GM12878 (cell line): ENCODE measurements at regions of chr11 and their contacts with region 1.

Region 1: DNA sequence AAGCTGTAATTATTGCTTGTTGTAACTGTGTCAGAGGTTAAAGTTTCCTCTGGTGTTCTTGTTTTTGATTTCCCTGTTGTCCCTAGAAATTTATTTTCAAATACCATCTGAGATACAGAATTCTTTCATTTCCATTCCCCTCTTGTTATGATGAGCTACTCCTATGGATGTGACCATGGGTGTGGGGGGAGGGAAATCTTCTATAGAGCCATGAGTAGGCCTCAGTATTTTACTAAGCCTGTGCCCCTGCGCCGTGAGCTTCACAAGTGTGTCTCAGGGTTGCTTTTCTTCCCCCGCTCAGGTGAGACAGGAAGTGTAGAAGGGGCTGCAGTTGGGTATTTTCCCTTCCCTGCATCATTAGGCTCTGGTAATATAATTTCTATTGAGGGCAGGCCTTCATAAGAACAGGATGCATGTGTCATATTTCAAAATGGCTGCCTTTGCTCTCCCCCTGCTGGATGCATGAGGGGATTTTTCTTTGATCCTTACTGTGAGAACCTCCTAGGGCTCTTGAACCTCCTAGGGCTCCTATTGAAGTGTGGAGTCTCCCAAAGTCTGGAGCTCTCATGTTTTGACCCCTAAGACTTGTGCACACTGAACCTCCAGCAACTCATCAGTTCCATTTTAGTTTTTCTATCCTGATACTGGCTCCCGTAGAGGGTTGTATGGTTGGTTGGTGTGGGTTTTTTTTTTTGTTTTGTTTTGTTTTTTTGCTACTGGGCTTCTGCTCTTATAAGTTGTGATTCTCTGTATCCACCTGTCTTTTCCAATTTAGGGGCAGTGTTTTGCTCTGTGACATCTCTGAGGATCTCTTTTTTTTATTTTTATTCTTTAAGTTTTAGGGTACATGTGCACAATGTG is 658.2 kb downstream of the NTM start:
- DNase-seq: no peak
- ATAC-seq: peak; percentile 80
- H3K4me3 ChIP-seq: no peak overlapping the region
- H3K27ac ChIP-seq: no peak overlapping the region
- H3K4me1 ChIP-seq: no peaks in the 10 kb centered on the region
- H3K27me3 ChIP-seq: no peaks in the 10 kb centered on the region
- CTCF ChIP-seq: peak; percentile 51 to 59 (median 52)
- EP300 ChIP-seq: no peak
- POLR2A ChIP-seq: no peak
- RAD21 ChIP-seq: peak; percentile 60

Region 2: DNA sequence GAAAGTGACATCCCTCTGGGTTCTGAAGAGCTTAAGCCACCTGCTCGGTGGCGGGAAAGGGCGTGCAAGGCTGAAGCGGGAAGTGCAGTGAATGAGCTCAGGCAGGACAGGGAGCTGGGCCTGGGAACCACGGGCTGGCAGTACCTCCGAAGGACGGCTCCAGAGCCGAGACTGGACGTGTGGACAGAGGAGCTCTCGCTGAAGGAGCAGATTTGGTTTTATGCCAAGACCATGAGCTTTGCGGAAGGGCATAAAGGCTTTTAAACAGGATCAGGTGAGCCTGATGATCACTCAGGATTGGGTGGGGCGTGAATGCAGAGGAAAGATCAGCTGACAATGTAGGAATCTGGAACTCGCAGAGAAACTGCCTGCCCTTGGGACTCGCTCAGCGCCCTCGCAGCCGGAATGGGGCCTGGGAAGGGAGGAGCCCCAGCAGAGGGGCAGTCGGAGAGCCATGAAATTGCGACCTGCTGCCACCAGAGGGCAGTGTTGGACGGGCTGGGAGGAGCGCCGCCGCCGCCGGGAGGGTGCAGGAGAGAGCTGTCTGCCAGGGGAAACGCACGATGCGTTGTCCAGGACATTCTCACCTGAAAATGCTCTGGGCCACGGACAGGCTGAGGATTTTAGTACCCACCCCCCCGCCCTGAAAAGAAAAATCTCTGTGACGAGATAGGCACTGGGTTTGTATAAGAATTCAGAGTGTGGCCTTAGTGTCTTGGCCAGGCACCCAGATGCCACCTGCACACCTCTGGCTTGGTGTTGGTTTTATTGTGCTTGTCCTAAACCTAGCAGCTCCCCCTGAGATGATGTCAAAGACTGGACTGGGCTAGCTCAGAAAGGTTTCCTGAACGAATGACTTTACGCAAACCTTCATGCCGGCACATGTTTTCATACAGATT is 333.8 kb before region 1 on chr11:
- CTCF ChIA-PET with region 1: no interaction called
- POLR2A ChIA-PET with region 1: no interaction called
- RAD21 ChIA-PET with region 1: no interaction called
- SMC1A ChIA-PET with region 1: no interaction called
- in situ Hi-C with region 1: no loop called
- intact Hi-C with region 1: loop called (anchors 10 kb)
- DNase-seq: no peak
- ATAC-seq: peak; percentile 99
- H3K4me3 ChIP-seq: no peak overlapping the region
- H3K27ac ChIP-seq: no peak overlapping the region
- H3K4me1 ChIP-seq: no peaks in the 10 kb centered on the region
- H3K27me3 ChIP-seq: peaks cover 0 to 3% of the 10 kb centered on the region in 2 experiments; a peak in 2 of 4 replicates
- CTCF ChIP-seq: peak; percentile 81 to 96 (median 94)
- EP300 ChIP-seq: no peak
- POLR2A ChIP-seq: no peak
- RAD21 ChIP-seq: peak; percentile 53

Region 3: GRCh38 chr11:131748151-131749050 is 280.2 kb before region 1 on chr11:
- CTCF ChIA-PET with region 1: interaction called, 8 read pairs
- POLR2A ChIA-PET with region 1: no interaction called
- RAD21 ChIA-PET with region 1: no interaction called
- SMC1A ChIA-PET with region 1: interaction called, 4 read pairs
- in situ Hi-C with region 1: no loop called
- intact Hi-C with region 1: loop called (anchors 2 kb)
- DNase-seq: no peak
- ATAC-seq: peak; percentile 92
- H3K4me3 ChIP-seq: no peak overlapping the region
- H3K27ac ChIP-seq: no peak overlapping the region
- H3K4me1 ChIP-seq: no peaks in the 10 kb centered on the region
- H3K27me3 ChIP-seq: no peaks in the 10 kb centered on the region; a peak in 3 of 4 replicates
- CTCF ChIP-seq: peak; percentile 77 to 79 (median 77)
- EP300 ChIP-seq: no peak
- POLR2A ChIP-seq: no peak
- RAD21 ChIP-seq: peak; percentile 63

Region 4: DNA sequence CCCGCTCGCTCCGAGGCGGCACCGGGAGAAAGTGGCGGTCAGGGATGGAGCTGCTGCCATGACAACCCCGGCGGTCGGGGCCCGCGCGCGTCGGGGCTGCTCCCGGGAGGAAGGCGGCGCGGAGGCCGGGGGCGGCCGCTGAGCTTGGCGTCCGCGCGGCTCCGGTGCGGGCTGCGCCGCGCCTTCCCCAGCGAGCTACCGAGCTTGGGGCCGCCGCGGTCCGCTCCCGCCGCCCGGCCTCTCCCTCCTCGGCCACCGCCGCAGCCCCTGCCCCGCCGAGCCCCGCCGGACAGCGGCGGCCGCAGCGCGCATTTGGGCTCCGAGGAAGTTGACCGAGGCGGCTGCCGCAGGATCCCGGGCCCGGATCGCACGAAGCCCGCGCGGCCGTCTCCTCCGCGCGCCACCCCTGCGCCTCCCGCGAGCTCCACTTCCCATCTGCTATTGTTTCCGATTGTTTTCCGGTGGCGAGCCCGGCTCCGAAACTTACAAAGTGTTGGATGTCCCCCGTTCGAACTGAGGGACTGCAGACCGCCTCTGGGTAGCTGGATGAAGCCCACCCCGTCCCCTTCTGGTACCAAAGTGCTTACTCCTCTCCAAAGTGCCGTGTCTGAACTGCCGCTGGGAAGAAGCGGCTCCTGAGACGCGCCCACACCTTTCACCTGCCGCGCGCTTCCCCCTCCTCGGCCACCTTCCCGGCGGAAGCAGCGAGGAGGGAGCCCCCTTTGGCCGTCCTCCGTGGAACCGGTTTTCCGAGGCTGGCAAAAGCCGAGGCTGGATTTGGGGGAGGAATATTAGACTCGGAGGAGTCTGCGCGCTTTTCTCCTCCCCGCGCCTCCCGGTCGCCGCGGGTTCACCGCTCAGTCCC is 117.9 kb before region 1 on chr11:
- CTCF ChIA-PET with region 1: interaction called, 5 read pairs
- POLR2A ChIA-PET with region 1: no interaction called
- RAD21 ChIA-PET with region 1: no interaction called
- SMC1A ChIA-PET with region 1: interaction called, 4 read pairs
- in situ Hi-C with region 1: no loop called
- intact Hi-C with region 1: loop called (anchors 1 kb)
- DNase-seq: no peak
- ATAC-seq: no peak
- H3K4me3 ChIP-seq: no peak overlapping the region
- H3K27ac ChIP-seq: no peak overlapping the region
- H3K4me1 ChIP-seq: no peaks in the 10 kb centered on the region
- H3K27me3 ChIP-seq: peaks cover 2 to 11% of the 10 kb centered on the region in 2 experiments
- CTCF ChIP-seq: no peak
- EP300 ChIP-seq: no peak
- POLR2A ChIP-seq: no peak
- RAD21 ChIP-seq: no peak

Region 5: GRCh38 chr11:131977231-131977630 is 51.4 kb before region 1 on chr11:
- CTCF ChIA-PET with region 1: no interaction called
- POLR2A ChIA-PET with region 1: no interaction called
- RAD21 ChIA-PET with region 1: no interaction called
- SMC1A ChIA-PET with region 1: no interaction called
- in situ Hi-C with region 1: no loop called
- intact Hi-C with region 1: no loop called
- DNase-seq: no peak
- ATAC-seq: no peak
- H3K4me3 ChIP-seq: no peak overlapping the region
- H3K27ac ChIP-seq: no peak overlapping the region
- H3K4me1 ChIP-seq: no peaks in the 10 kb centered on the region
- H3K27me3 ChIP-seq: no peaks in the 10 kb centered on the region; a peak in 2 of 4 replicates
- CTCF ChIP-seq: no peak
- EP300 ChIP-seq: no peak
- POLR2A ChIP-seq: no peak
- RAD21 ChIP-seq: no peak

Region 6: GRCh38 chr11:132064987-132065620 is 36.5 kb after region 1 on chr11:
- CTCF ChIA-PET with region 1: no interaction called
- POLR2A ChIA-PET with region 1: no interaction called
- RAD21 ChIA-PET with region 1: no interaction called
- SMC1A ChIA-PET with region 1: no interaction called
- in situ Hi-C with region 1: no loop called
- intact Hi-C with region 1: no loop called
- DNase-seq: no peak
- ATAC-seq: no peak
- H3K4me3 ChIP-seq: no peak overlapping the region
- H3K27ac ChIP-seq: no peak overlapping the region
- H3K4me1 ChIP-seq: no peaks in the 10 kb centered on the region
- H3K27me3 ChIP-seq: no peaks in the 10 kb centered on the region
- CTCF ChIP-seq: no peak
- EP300 ChIP-seq: no peak
- POLR2A ChIP-seq: no peak
- RAD21 ChIP-seq: no peak

Region 7: GRCh38 chr11:132158093-132158492 is 129.5 kb after region 1 on chr11:
- CTCF ChIA-PET with region 1: no interaction called
- POLR2A ChIA-PET with region 1: no interaction called
- RAD21 ChIA-PET with region 1: no interaction called
- SMC1A ChIA-PET with region 1: no interaction called
- in situ Hi-C with region 1: no loop called
- intact Hi-C with region 1: no loop called
- DNase-seq: no peak
- ATAC-seq: peak; percentile 69
- H3K4me3 ChIP-seq: no peak overlapping the region
- H3K27ac ChIP-seq: no peak overlapping the region
- H3K4me1 ChIP-seq: no peaks in the 10 kb centered on the region
- H3K27me3 ChIP-seq: peaks cover 0 to 1% of the 10 kb centered on the region in 2 experiments; a peak in 1 of 4 replicates
- CTCF ChIP-seq: peak; percentile 43 to 61 (median 46)
- EP300 ChIP-seq: no peak
- POLR2A ChIP-seq: no peak
- RAD21 ChIP-seq: peak; percentile 38

Region 8: DNA sequence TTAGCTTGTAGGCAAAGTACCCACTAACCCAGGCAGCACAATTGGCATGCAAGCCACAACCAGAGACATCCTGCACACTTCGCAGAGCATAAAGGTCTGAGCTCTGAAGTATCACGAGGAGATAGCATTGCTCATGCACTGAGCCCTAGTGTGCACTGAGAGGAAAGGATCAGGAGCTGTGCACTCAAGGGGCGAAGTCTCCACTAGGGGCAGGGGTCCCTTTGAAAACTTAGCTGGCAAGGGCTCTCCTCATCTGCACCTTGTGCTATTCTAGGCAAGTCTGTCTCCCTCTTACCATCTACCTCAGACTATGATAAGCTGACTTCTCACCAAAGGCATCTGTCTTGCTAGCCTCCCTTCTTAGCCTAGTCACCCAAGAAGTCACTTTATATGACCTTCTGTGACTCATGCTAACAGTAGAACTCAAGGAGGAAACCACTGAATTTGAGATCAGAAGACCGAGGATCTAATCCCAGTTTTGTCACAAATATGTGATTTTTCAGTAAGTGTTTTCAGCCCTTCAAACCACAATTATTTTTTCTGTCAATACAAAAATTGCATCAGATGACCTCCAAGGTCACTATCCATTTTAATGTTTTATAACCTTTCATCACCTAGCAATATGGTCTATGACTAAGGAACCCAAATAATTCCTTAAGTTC is 419.9 kb after region 1 on chr11:
- CTCF ChIA-PET with region 1: no interaction called
- POLR2A ChIA-PET with region 1: no interaction called
- RAD21 ChIA-PET with region 1: no interaction called
- SMC1A ChIA-PET with region 1: no interaction called
- in situ Hi-C with region 1: no loop called
- intact Hi-C with region 1: no loop called
- DNase-seq: no peak
- ATAC-seq: no peak
- H3K4me3 ChIP-seq: no peak overlapping the region
- H3K27ac ChIP-seq: no peak overlapping the region
- H3K4me1 ChIP-seq: no peaks in the 10 kb centered on the region
- H3K27me3 ChIP-seq: no peaks in the 10 kb centered on the region; a peak in 2 of 4 replicates
- CTCF ChIP-seq: no peak
- EP300 ChIP-seq: no peak
- POLR2A ChIP-seq: no peak
- RAD21 ChIP-seq: no peak